ENCODE measurements at regions of chr15 and their contacts with region 1.

Region 1: GRCh38 chr15:69523010-69524001 is 70.7 kb downstream of the RPLP1 start:
- DNase-seq: peak; percentile 40 to 75
- H3K4me3 ChIP-seq: no peak overlapping the region
- H3K27ac ChIP-seq: peak overlapping the region; percentile 58
- H3K4me1 ChIP-seq: peaks cover 19% of the 10 kb centered on the region
- H3K27me3 ChIP-seq: no peaks in the 10 kb centered on the region
- CTCF ChIP-seq: peak; percentile 73

Region 2: DNA sequence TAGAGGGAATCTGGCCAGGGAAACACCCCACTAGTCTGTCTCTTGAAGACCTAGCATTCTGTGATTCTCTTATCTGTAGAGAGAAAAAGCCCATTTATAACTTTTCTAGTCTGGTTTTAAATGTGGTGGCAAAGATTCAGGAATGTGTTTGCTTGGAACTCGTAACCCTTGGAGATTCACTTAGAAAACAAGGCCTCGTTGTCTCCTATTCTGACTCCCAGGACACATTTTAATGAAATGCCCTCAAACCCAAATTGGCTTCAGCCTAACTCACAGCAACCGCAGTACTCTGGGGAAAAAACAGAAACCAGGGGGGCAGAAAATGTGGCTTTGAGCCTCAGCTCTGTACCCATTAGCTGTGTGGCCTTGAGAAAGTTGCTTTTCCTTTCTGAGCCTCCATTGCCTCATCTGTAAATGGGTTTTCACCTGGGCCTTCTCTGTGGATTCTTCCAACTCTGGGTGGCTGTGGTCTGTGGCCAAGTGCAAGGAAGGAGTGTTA is 34.2 kb before region 1 on chr15:
- CTCF ChIA-PET with region 1: no interaction called
- POLR2A ChIA-PET with region 1: interaction called, 7 read pairs
- intact Hi-C with region 1: loop called (anchors 2 kb)
- DNase-seq: no peak
- H3K4me3 ChIP-seq: no peak overlapping the region
- H3K27ac ChIP-seq: no peak overlapping the region
- H3K4me1 ChIP-seq: peaks cover 10% of the 10 kb centered on the region
- H3K27me3 ChIP-seq: no peaks in the 10 kb centered on the region
- CTCF ChIP-seq: no peak

Region 3: GRCh38 chr15:69557340-69558137 is 34.2 kb after region 1 on chr15:
- CTCF ChIA-PET with region 1: no interaction called
- POLR2A ChIA-PET with region 1: interaction called, 6 read pairs
- intact Hi-C with region 1: loop called (anchors 2 kb)
- DNase-seq: peak; percentile 67 to 95
- H3K4me3 ChIP-seq: no peak overlapping the region
- H3K27ac ChIP-seq: peak overlapping the region; percentile 63
- H3K4me1 ChIP-seq: peaks cover 54% of the 10 kb centered on the region
- H3K27me3 ChIP-seq: no peaks in the 10 kb centered on the region
- CTCF ChIP-seq: no peak

Region 4: GRCh38 chr15:69593981-69594966 is 71.0 kb after region 1 on chr15:
- CTCF ChIA-PET with region 1: interaction called, 3 read pairs
- POLR2A ChIA-PET with region 1: no interaction called
- intact Hi-C with region 1: loop called (anchors 5 kb)
- DNase-seq: peak; percentile 83 to 98
- H3K4me3 ChIP-seq: peak overlapping the region; percentile 5; the same call in 1 of the 2 replicates
- H3K27ac ChIP-seq: peak overlapping the region; percentile 85
- H3K4me1 ChIP-seq: peaks cover 49% of the 10 kb centered on the region
- H3K27me3 ChIP-seq: peaks cover 27% of the 10 kb centered on the region
- CTCF ChIP-seq: no peak

Region 5: DNA sequence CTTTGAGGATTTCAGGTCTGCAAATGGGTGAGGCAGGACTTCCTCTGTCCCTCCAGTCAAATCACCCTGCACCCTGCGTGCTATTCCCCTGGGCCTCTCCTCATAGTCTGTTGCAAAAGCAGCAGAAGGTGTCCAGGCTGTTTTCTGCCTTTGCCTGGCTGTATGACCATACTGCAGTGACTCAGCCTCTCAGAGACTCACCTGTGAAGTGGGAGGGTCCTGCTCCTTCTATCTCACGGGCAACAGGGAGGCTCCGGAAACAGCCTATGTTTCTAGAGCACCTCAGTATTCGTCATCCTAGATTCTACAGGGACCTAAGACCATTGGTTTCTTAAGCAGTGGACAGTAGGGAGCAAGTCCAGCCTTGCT is 358.0 kb after region 1 on chr15:
- CTCF ChIA-PET with region 1: interaction called, 18 read pairs
- POLR2A ChIA-PET with region 1: no interaction called
- intact Hi-C with region 1: no loop called
- DNase-seq: peak; percentile 41 to 69
- H3K4me3 ChIP-seq: no peak overlapping the region
- H3K27ac ChIP-seq: no peak overlapping the region
- H3K4me1 ChIP-seq: 0 out of 2 replicates have a peak, but pooled peaks cover 8% of the 10 kb centered on the region
- H3K27me3 ChIP-seq: no peaks in the 10 kb centered on the region
- CTCF ChIP-seq: no peak